Activated CD4-positive, alpha-beta T cell treated with anti-CD3 and anti-CD28 coated beads for 36 hours (primary cell): ENCODE measurements at regions of chr14 and their contacts with region 1.

Region 1: DNA sequence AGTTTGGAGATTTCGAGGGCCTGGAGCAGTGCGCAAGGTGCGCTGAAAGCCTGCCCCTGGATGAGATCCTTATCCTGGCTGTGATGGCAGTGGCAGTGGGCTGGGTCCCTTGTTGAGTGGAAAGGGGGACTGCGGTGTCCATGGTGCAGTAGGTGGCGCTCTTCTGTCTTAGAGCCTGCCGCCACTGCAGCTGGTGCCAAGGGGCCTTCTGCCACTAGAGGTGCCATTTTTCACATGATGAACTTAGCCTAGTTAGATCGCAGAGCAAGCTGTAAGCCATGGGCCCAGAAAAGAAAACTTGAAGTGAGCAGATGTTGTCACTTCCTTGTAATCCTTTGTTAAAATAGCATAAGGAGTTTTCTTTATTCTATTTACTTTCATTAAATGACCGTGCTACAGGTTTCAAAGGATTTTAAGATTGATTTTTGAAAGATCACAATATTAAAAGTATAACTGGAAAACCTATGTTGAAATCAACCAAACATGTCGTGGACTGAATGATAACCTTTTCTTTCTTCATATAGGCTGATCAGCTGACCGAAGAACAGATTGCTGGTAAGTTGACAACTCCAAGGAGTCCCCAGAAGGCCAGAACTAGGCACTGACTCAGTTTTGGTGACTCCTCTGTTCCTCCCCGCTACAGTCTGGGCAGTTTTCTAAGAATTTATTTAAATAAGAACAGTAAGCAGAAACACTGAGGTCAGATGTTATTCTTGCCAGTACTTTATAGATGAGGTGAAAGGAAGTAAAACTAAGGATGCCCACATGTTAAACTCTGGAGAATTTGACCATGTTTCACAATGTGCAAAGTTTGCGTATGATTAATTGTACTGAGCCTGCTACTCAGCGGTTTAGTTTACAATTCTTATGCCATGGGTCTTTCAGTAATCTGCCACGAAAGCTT is 3.0 kb downstream of the CALM1 start:
- DNase-seq: peak; percentile 93
- ATAC-seq: peak; percentile 62
- H3K4me3 Mint-ChIP-seq: peak overlapping the region; percentile 97
- H3K27ac Mint-ChIP-seq: peak overlapping the region; percentile 95
- H3K4me1 Mint-ChIP-seq: peaks cover 53% of the 10 kb centered on the region
- H3K27me3 Mint-ChIP-seq: no peaks in the 10 kb centered on the region

Region 2: DNA sequence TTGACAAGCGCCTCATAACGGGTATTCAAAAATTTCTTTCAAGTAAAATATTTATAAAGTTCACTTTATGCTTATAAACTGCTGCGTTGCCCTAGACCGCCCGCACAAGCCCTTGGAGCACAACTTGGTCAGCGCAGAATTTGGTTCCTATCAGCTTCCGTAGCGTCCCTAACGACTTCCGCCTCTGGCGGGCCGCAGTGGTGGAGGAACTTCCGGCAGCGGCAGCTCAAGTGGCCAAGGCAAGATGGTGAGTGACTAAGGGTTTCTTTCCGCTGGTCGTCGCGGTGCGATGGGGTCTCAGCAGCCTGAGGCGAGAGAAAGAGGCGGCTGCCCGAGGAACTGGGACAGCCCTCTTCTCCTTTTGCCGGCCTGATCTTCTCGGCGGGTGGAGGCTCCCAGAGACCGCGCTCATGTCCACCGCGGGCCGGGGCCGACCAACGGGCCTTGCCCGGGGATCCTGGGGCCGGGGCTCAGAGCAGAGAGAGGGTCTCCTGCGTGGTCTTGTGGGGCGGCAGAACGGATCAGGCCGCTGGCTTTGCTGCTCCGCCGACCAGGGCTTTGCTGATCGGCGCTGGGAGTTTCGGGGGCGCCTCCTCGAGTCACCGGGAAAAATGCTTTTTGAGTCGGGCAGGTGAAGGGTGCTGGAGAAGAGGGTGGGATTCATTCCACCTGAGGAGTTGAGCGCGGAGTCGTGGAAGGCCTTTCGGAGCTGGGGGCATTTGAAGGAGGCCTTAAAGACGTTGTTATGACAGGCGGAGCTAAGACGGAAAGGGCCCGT is 143.2 kb before region 1 on chr14 and contains the start of gene PSMC1:
- CTCF ChIA-PET with region 1: interaction called, 3 read pairs
- POLR2A ChIA-PET with region 1: no interaction called
- intact Hi-C with region 1: loop called (anchors 1 to 2 kb)
- DNase-seq: peak; percentile 94
- ATAC-seq: peak; percentile 97
- H3K4me3 Mint-ChIP-seq: peak within 1 kb of the TSS; percentile 99
- H3K27ac Mint-ChIP-seq: peak within 1 kb of the TSS; percentile 97
- H3K4me1 Mint-ChIP-seq: peaks cover 26% of the 10 kb centered on the region
- H3K27me3 Mint-ChIP-seq: no peaks in the 10 kb centered on the region
- total RNA-seq, gene PSMC1: 77.3 to 127 TPM

Region 3: DNA sequence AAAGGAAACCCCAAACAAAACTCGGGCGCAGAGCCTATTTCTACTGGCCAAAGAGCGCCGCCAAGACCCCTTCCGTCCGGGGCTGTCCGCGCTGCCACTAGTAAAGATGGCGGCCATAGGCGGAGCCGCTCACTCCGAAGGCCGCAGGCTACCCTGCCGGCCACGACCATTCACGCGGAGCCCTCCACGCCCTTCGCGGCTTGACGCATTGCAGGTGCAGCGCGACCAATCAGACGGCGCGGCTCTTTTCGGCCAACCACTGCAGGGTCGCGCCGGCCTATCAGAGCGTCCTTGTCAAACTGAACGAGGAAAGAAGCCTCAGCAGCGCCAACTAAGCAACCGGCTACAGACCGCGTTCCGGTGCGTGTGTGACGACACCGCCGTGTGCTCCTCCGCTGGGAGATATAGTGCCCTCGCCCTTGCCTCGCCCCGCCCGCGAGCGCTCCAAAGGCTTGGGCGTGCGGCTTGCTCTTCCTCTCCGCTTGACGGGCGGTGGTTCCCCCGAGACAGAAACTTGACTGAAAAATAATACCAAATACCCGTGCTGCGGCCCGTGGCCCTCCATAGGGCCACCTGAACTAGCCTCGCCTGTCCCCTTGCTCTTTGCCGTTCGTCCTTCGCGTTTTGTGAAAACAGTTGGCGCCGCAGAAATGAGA is 16.6 kb before region 1 on chr14:
- CTCF ChIA-PET with region 1: interaction called, 17 read pairs
- POLR2A ChIA-PET with region 1: interaction called, 36 read pairs
- intact Hi-C with region 1: loop called (anchors 1 kb)
- DNase-seq: peak; percentile 99
- ATAC-seq: peak; percentile 89
- H3K4me3 Mint-ChIP-seq: no peak overlapping the region
- H3K27ac Mint-ChIP-seq: no peak overlapping the region
- H3K4me1 Mint-ChIP-seq: peaks cover 27% of the 10 kb centered on the region
- H3K27me3 Mint-ChIP-seq: no peaks in the 10 kb centered on the region

Region 4: GRCh38 chr14:90677484-90678050 is 277.8 kb after region 1 on chr14:
- CTCF ChIA-PET with region 1: no interaction called
- POLR2A ChIA-PET with region 1: no interaction called
- intact Hi-C with region 1: loop called in 1 of 2 experiments (anchors 5 kb)
- DNase-seq: peak; percentile 23
- ATAC-seq: peak; percentile 93
- H3K4me3 Mint-ChIP-seq: peak overlapping the region; percentile 33
- H3K27ac Mint-ChIP-seq: peak overlapping the region; percentile 89
- H3K4me1 Mint-ChIP-seq: peaks cover 38% of the 10 kb centered on the region
- H3K27me3 Mint-ChIP-seq: no peaks in the 10 kb centered on the region

Region 5: GRCh38 chr14:90827916-90828610 is 428.3 kb after region 1 on chr14:
- CTCF ChIA-PET with region 1: no interaction called
- POLR2A ChIA-PET with region 1: no interaction called
- intact Hi-C with region 1: loop called in 1 of 2 experiments (anchors 2 kb)
- DNase-seq: peak; percentile 95
- ATAC-seq: peak; percentile 99
- H3K4me3 Mint-ChIP-seq: peak overlapping the region; percentile 68
- H3K27ac Mint-ChIP-seq: peak overlapping the region; percentile 88
- H3K4me1 Mint-ChIP-seq: peaks cover 20% of the 10 kb centered on the region
- H3K27me3 Mint-ChIP-seq: no peaks in the 10 kb centered on the region

Region 6: DNA sequence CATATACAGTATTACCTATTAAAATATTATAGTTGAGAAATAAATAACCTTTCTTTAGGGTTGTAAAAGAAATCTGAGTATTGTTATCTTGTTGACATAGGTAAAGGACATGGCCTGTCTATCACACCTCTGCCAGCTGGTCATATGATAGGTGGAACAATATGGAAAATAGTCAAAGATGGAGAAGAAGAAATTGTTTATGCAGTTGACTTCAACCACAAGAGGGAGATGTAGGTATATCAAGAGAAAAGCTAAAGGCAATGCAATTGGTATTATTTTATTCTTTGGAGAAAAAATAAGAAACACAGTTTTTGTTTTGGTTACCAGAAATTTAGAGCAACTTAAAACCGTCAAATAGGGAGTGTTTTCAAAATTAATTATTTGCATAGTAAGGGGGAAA is 1735.5 kb after region 1 on chr14:
- CTCF ChIA-PET with region 1: no interaction called
- POLR2A ChIA-PET with region 1: no interaction called
- intact Hi-C with region 1: no loop called
- DNase-seq: no peak
- ATAC-seq: no peak
- H3K4me3 Mint-ChIP-seq: no peak overlapping the region
- H3K27ac Mint-ChIP-seq: no peak overlapping the region
- H3K4me1 Mint-ChIP-seq: no peaks in the 10 kb centered on the region
- H3K27me3 Mint-ChIP-seq: no peaks in the 10 kb centered on the region